Tibial artery (tissue), 4 donors: ENCODE measurements at regions of chr10 and their contacts with region 1.

Region 1: GRCh38 chr10:60816628-60817397 is 38.5 kb downstream of the CDK1 start:
- DNase-seq: peak in 1 of 2 donors; percentile 60
- H3K4me3 ChIP-seq: no peak overlapping the region
- H3K27ac ChIP-seq: peak overlapping the region; percentile 1 to 31
- H3K4me1 ChIP-seq: peaks cover 0 to 22% (median 2%) of the 10 kb centered on the region in 4 donors
- H3K27me3 ChIP-seq: no peaks in the 10 kb centered on the region
- CTCF ChIP-seq: peak; percentile 76 to 88

Region 2: GRCh38 chr10:59405235-59405634 is 1411.6 kb before region 1 on chr10:
- intact Hi-C with region 1: no loop called
- DNase-seq: no peak
- H3K4me3 ChIP-seq: no peak overlapping the region
- H3K27ac ChIP-seq: no peak overlapping the region
- H3K4me1 ChIP-seq: no peaks in the 10 kb centered on the region
- H3K27me3 ChIP-seq: no peaks in the 10 kb centered on the region
- CTCF ChIP-seq: no peak

Region 3: GRCh38 chr10:60883187-60883586 is 66.4 kb after region 1 on chr10:
- intact Hi-C with region 1: no loop called
- DNase-seq: no peak
- H3K4me3 ChIP-seq: no peak overlapping the region
- H3K27ac ChIP-seq: no peak overlapping the region
- H3K4me1 ChIP-seq: no peaks in the 10 kb centered on the region
- H3K27me3 ChIP-seq: no peaks in the 10 kb centered on the region
- CTCF ChIP-seq: peak in 1 of 2 experiments; percentile 31

Region 4: DNA sequence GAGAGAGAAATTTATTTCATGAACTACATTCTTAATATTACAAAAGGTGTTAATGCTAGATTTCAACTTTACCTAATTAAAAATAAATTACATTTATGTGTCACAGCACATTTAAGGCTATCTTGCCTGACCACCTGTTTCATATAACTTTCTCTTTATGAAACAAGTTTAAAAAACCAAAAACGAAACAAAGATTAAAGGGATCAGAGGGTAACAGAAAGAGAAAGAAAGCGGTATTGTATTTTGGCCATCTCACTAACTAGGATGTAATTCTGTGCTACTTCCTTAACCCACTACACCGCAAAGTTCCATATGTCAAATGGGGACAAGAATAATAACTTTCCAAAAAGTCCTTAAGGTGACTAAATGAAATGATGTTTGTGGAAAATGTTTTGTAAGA is 133.5 kb after region 1 on chr10:
- intact Hi-C with region 1: loop called (anchors 5 kb)
- DNase-seq: no peak
- H3K4me3 ChIP-seq: no peak overlapping the region
- H3K27ac ChIP-seq: no peak overlapping the region
- H3K4me1 ChIP-seq: no peaks in the 10 kb centered on the region
- H3K27me3 ChIP-seq: no peaks in the 10 kb centered on the region
- CTCF ChIP-seq: no peak

Region 5: DNA sequence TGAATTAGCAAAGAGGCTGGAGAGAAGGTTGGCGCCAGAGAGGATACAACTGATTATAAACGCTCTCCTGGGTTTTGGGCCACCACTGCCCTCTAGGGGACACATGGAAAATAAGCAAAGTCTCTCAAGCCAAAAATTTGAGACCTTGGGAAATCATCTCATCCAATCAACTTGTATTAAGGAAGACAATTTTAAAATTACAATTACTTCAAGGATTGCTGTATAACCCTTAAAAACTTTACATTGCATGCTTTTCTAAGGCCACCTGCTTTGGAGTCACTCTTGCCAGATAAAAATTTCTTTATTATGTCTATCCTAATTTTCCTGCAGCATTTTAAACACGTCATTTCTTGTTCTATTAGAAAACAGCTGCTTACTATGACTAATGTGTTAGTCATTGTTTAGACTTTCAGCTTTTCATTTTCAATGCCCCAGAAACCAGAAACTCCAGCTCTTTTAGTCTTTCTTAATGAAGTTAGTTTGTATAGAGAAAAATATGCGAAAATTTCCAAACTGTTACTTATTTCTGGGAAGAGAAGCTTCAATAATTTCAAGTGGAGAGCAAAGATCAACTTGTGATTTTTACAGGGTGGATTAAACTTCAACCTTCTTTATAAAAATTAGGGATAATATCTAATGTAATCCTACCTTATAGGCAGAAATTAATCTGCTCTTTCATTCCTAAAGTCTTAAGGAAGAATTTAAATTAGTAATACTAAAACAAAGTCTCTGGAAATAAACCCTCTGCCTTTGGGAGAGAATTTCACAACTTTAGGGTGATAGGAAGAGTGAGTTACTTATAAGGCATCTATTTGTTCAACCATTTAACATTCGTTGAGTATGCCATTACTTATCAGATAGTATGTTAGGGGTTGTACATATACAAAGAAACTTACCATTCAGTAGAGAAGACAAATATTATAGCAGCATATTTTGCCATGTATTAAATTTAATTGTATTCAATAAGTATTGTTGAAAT is 147.7 kb after region 1 on chr10:
- intact Hi-C with region 1: loop called (anchors 2 kb)
- DNase-seq: peak; percentile 63 to 77
- H3K4me3 ChIP-seq: no peak overlapping the region
- H3K27ac ChIP-seq: peak overlapping the region; percentile 4 to 55
- H3K4me1 ChIP-seq: peaks cover 0 to 14% (median 5%) of the 10 kb centered on the region in 4 donors
- H3K27me3 ChIP-seq: no peaks in the 10 kb centered on the region
- CTCF ChIP-seq: peak; percentile 76 to 78

Region 6: DNA sequence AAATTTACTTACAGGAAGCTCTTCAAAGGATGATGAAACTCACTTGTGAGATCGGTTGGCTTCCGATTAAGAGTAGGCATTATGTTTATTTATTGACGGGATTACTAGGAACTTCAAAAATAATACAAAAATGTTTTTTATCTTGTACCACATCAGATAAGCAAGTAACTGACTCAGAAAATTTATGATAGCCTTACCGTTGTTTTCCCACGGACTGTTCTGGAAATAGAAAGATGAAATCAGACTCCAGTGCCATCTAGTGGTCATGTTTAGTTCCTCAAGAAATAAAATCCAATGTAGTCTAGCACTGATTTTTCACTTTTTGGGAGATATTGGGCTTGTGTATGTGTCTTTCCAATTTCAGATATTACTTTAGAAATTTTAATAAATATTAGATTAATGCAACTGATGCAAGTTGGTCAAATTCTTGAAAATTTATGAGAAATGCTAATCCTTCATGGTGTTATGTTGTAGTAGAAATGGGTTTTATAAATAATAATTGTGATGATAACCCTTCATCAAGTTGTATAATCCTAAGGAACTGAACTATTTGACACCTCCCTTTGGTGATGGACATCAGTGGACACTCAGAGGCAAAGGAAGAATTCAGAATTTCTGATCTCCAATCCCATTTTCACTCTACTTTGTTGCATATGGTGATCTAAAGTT is 467.5 kb after region 1 on chr10:
- intact Hi-C with region 1: loop called (anchors 10 kb)
- DNase-seq: no peak
- H3K4me3 ChIP-seq: no peak overlapping the region
- H3K27ac ChIP-seq: peak overlapping the region in 1 of 2 donors; percentile 23
- H3K4me1 ChIP-seq: peaks cover 0 to 5% (median 0%) of the 10 kb centered on the region in 4 donors
- H3K27me3 ChIP-seq: no peaks in the 10 kb centered on the region
- CTCF ChIP-seq: peak; percentile 77 to 79

Region 7: DNA sequence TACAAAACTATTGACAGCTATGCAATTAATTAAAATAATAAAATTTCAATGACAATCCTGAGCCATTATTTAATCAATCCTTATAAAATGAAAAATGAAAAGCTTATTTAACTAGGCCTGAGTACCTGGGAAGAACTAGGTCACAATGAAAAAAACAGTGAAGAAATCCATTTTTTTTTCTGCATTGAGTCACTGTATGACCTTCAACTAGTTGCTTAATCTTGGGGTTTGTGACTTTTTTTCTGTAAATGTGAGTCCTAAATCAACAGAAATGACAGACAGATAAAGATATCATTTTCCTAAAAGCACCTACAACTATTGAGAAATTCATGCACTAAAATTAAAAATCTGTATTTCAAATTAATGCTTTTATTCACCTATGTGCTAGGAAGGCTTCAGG is 539.5 kb after region 1 on chr10:
- intact Hi-C with region 1: no loop called
- DNase-seq: no peak
- H3K4me3 ChIP-seq: no peak overlapping the region
- H3K27ac ChIP-seq: no peak overlapping the region
- H3K4me1 ChIP-seq: no peaks in the 10 kb centered on the region
- H3K27me3 ChIP-seq: no peaks in the 10 kb centered on the region
- CTCF ChIP-seq: no peak

Region 8: DNA sequence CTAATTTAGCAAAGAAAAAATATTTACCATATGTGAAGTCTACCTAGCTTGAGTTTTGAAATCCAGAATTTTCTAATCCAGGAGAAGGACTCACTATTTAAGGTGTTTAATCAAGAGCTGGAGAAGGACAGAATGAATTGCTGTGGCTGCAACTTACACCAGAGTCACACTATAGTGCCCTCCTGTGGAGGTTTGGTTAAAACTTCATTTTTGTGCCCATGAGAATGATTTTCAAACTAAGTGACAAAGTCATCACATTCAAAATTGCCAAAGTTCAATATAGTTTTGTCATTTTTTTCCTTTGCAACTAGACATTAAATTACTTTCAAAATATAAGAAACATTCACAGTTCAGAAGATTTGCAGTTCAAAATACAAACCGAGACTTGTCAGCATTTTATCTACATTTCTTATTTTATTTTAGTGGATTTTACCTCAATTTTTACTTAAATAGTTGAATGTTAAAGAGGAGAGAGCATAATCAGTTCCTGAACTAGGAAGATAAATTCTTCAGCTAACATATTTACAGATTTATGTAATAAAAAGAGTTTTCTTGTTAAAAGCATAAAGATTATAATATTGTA is 916.6 kb after region 1 on chr10:
- intact Hi-C with region 1: loop called (anchors 10 kb)
- DNase-seq: no peak
- H3K4me3 ChIP-seq: no peak overlapping the region
- H3K27ac ChIP-seq: no peak overlapping the region
- H3K4me1 ChIP-seq: no peaks in the 10 kb centered on the region
- H3K27me3 ChIP-seq: no peaks in the 10 kb centered on the region
- CTCF ChIP-seq: peak; percentile 52 to 59

Region 9: DNA sequence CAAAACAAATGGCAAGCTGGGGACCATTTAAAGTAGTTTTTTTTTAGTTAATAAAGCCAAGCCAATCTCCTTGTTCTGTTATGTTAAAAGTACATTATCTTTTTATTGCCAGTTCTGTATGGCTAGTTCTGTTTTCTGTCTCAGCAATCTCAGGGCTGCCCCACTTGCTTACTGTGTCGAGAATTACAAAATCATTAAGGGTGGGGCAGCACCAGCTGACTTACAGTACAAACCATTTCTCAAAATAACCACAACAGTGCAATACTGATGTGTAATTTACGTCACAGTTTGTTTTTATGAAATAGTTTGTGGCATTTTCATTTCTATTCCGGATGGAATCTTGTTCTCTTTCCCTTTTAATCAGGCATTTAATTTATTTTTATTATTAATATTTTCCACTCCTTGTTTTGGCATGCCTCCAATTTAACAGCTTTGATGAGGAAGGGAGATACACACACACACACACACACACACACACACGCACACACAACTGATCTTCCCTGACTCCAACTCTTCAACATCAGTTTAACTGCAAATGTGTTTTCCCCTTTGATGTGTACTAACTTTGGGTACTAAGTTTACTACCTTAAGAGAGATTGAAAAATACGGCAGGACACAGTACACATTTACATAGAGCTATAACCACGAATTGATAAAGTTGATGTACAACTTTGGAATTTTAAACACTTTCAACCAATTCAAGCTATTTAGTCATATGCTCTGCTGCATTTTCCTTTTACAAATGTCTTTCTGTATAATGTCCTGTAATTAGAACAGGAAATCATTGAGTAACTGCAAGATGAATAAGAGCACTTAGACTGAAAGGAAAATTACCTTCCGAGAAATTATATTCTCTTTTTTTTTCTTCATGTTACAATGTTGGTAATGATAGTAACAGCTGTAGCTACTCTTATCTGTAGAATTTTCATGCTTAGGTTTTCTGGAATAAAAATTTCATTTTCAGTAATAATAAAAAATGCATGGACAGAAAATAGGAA is 1176.2 kb after region 1 on chr10:
- intact Hi-C with region 1: no loop called
- DNase-seq: peak; percentile 83 to 86
- H3K4me3 ChIP-seq: peak overlapping the region; percentile 25 to 36
- H3K27ac ChIP-seq: peak overlapping the region; percentile 66 to 69
- H3K4me1 ChIP-seq: peaks cover 0 to 69% (median 30%) of the 10 kb centered on the region in 4 donors
- H3K27me3 ChIP-seq: no peaks in the 10 kb centered on the region
- CTCF ChIP-seq: no peak